Gastrocnemius medialis (tissue), 4 donors: ENCODE measurements at regions of chr15 and their contacts with region 1.

Region 1: GRCh38 chr15:95146481-95146880 is 915.1 kb downstream of the MCTP2 start:
- DNase-seq: no peak
- ATAC-seq: no peak
- H3K4me3 ChIP-seq: no peak overlapping the region
- H3K27ac ChIP-seq: no peak overlapping the region
- H3K4me1 ChIP-seq: no peaks in the 10 kb centered on the region
- H3K27me3 ChIP-seq: no peaks in the 10 kb centered on the region
- CTCF ChIP-seq: no peak
- POLR2A ChIP-seq: no peak

Region 2: DNA sequence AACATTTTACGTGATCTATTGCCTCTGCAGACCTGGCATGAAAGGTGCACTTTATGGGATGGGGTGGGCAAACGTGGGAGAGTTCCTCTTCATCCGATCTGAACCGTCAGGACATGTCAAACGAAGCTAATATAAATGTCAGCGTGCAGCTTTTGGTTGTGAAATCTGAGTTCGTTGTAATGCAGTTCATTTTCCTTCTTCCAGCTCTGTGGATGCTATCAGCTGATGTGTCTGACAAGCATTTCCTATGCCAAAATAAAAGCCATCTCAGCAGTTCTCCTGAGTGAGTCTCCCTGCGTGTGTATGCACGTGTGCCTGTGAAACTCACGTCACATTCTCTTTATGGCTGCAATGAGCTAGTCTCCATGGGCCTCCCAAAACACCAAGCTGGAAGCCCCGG is 402.8 kb before region 1 on chr15:
- in situ Hi-C with region 1: no loop called
- intact Hi-C with region 1: loop called (anchors 5 kb)
- DNase-seq: no peak
- ATAC-seq: no peak
- H3K4me3 ChIP-seq: no peak overlapping the region
- H3K27ac ChIP-seq: no peak overlapping the region
- H3K4me1 ChIP-seq: no peaks in the 10 kb centered on the region
- H3K27me3 ChIP-seq: no peaks in the 10 kb centered on the region
- CTCF ChIP-seq: no peak
- POLR2A ChIP-seq: no peak

Region 3: DNA sequence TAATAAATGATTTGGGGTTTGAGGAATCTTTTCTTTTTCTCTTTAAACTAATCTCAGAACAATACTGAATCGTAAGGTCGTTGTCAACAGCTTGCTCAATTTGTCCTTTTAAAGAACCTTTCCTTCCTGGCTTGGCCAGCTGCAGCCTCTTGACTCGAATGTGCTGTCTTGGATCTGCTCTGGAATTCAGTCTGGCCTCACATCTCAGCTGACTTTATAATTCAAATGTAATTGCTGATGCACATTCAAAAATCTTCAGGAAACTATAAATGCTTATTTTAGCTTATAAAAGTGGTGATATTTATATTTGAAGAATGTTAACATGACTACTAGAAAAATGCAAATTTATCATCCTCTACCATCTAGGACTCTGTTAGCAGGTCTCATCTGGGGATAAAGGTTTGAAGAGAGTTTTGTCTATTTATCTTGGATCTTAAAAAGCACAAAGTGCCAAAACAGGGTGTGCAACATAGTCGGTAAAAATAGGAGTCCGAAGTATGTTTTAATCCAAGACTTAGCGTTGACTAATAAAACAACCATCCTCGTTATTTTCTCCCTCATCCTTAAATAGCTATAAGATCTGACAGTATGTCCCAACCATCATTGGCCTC is 120.1 kb after region 1 on chr15:
- in situ Hi-C with region 1: no loop called
- intact Hi-C with region 1: no loop called
- DNase-seq: peak; percentile 4 to 29
- ATAC-seq: peak; percentile 41 to 63
- H3K4me3 ChIP-seq: no peak overlapping the region
- H3K27ac ChIP-seq: peak overlapping the region; percentile 18 to 70 (median 54)
- H3K4me1 ChIP-seq: peaks cover 0 to 3% of the 10 kb centered on the region in 2 donors
- H3K27me3 ChIP-seq: no peaks in the 10 kb centered on the region
- CTCF ChIP-seq: no peak
- POLR2A ChIP-seq: no peak